PC-3 (cell line): ENCODE measurements at regions of chr9 and their contacts with region 1.

Region 1: DNA sequence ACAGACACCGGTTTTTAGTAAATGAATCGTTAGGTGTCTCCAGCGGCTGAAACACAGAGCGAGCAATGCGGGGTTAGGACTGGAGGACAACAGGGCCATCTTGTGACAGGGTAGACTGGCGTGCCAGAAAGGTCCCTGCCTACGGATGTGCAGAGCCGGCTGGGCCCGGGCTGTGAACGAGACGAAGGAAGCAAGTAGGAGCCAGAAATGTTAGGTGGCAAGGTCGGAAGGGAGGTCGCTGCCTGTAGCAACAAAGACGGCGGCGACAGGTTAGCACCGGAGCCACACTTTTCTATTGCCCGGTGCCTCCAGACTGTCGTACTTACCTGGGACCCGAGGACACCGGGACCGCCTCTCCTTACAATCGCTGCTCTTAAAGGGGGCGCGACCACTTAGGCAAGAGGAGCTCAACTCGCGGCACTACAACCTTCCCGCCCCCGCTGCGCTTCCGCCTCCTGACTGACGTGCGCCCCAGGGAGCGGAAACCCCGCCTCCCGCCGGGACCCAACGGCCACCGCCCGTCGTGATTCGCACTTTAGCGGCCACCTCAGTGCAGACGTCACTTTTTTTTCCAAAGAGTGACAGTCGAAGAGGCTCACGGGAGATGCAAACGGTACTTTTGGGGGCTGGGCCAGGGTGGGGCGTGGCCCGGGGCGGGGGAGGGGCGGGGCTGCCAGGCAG is at the start of gene INIP:
- DNase-seq: peak; percentile 96
- ATAC-seq: peak; percentile 94
- H3K4me3 ChIP-seq: peak within 1 kb of the TSS; percentile 97
- H3K27ac ChIP-seq: peak within 1 kb of the TSS; percentile 73
- H3K4me1 ChIP-seq: peaks cover 9% of the 10 kb centered on the region; the same call in 1 of the 2 replicates
- H3K27me3 ChIP-seq: no peaks in the 10 kb centered on the region
- CTCF ChIP-seq: no peak; the same call in 1 of the 2 replicates
- total RNA-seq, gene INIP: 14.6 and 15.1 TPM in 2 replicates

Region 2: DNA sequence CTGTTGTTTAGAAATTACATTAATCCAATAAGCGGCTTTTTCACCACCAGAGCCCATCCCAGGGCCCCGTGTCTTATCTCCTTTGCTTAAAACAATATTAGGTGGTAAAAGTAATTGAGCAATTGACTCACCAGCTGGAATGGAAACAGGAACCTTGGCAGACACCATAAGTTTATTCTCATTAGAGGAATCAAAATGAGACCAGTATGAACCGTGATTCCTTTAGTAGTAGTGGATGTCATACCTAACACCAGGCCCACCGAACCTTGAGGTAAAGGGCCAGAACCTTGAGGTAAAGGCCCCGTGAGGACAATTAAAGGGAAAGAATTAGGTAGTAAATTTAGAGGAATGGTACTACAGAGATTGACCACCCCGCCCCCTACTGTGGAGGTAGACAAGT is 321.4 kb before region 1 on chr9:
- CTCF ChIA-PET with region 1: no interaction called
- POLR2A ChIA-PET with region 1: no interaction called
- intact Hi-C with region 1: no loop called
- DNase-seq: no peak
- ATAC-seq: no peak
- H3K4me3 ChIP-seq: no peak overlapping the region
- H3K27ac ChIP-seq: no peak overlapping the region
- H3K4me1 ChIP-seq: no peaks in the 10 kb centered on the region
- H3K27me3 ChIP-seq: no peaks in the 10 kb centered on the region
- CTCF ChIP-seq: no peak

Region 3: DNA sequence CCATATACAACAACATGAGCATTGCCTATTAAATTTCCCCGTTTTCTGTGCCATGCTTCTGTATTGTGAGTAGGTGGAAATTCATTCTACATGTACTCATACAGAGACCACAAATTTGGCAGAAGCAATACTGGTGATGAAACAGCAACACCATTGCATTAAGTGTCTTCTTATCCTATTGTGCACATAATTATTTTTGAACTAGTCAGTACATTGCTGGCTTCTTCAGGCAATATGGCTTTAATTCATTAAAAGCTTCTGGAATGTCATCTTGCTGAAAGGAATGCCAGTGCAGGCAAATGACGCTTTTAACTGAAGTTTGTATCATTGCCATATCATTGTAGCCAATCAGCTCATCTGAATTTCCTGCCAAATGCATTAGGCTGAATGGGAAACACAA is 148.6 kb before region 1 on chr9:
- CTCF ChIA-PET with region 1: no interaction called
- POLR2A ChIA-PET with region 1: no interaction called
- intact Hi-C with region 1: no loop called
- DNase-seq: no peak
- ATAC-seq: no peak
- H3K4me3 ChIP-seq: no peak overlapping the region
- H3K27ac ChIP-seq: no peak overlapping the region
- H3K4me1 ChIP-seq: no peaks in the 10 kb centered on the region
- H3K27me3 ChIP-seq: no peaks in the 10 kb centered on the region
- CTCF ChIP-seq: no peak

Region 4: GRCh38 chr9:112750111-112750767 is 32.4 kb after region 1 on chr9 and contains the start of gene SNX30:
- CTCF ChIA-PET with region 1: no interaction called
- POLR2A ChIA-PET with region 1: interaction called, 3 read pairs
- intact Hi-C with region 1: loop called (anchors 1 kb)
- DNase-seq: peak; percentile 86
- ATAC-seq: peak; percentile 49
- H3K4me3 ChIP-seq: peak within 1 kb of the TSS; percentile 95
- H3K27ac ChIP-seq: peak within 1 kb of the TSS; percentile 47
- H3K4me1 ChIP-seq: peaks cover 40% of the 10 kb centered on the region
- H3K27me3 ChIP-seq: no peaks in the 10 kb centered on the region
- CTCF ChIP-seq: no peak
- total RNA-seq, gene SNX30: 6.4 and 13.6 TPM in 2 replicates

Region 5: GRCh38 chr9:112793213-112793810 is 75.5 kb after region 1 on chr9:
- CTCF ChIA-PET with region 1: interaction called, 4 read pairs
- POLR2A ChIA-PET with region 1: no interaction called
- intact Hi-C with region 1: loop called (anchors 5 kb)
- DNase-seq: peak; percentile 69
- ATAC-seq: peak; percentile 82
- H3K4me3 ChIP-seq: no peak overlapping the region
- H3K27ac ChIP-seq: no peak overlapping the region
- H3K4me1 ChIP-seq: no peaks in the 10 kb centered on the region
- H3K27me3 ChIP-seq: no peaks in the 10 kb centered on the region
- CTCF ChIP-seq: peak; percentile 84

Region 6: DNA sequence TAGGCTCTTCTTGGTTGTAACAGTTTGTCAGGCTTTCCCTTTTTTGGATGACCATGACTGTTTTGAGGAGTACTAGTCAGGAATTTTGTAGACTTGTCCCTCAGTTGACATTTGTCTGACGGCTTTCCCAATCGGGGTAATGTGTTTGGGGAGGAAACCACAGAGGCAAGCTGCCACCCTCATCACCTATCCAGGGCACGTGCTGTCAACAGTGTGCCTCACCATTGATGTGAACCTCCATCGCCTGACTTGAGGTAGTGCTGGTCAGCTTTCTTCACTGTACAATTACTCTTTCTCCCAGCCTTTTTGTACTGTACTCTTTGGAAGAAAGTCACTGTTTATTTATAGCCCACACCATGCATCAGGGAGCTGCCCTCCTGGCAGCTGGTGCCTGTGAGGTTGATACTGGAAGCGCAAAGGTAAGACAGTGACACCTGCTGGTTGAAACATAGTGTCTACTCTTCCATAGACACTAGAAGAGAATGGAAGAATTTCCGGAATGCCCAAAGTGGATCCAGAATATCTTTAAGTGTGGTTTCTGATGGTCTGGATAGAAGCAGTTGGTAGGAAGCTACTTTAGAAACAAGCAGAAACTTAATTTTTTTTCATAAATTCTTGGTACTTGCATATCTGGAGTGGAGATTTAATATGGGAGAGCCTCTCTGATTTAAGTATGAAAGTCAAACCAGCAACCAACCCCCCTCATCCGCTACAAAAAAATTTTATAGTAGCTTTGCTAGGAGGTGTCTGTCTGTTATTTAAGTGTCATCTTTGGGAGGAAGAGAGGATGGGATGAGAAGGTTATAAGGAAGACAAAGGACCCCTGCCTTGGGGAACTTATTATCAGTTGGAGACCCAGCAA is 102.1 kb after region 1 on chr9:
- CTCF ChIA-PET with region 1: no interaction called
- POLR2A ChIA-PET with region 1: no interaction called
- intact Hi-C with region 1: loop called (anchors 5 kb)
- DNase-seq: peak; percentile 65
- ATAC-seq: peak; percentile 97
- H3K4me3 ChIP-seq: no peak overlapping the region
- H3K27ac ChIP-seq: no peak overlapping the region
- H3K4me1 ChIP-seq: no peaks in the 10 kb centered on the region
- H3K27me3 ChIP-seq: no peaks in the 10 kb centered on the region
- CTCF ChIP-seq: peak; percentile 78